AG04449 (cell line): ENCODE measurements at regions of chr2 and their contacts with region 1.

Region 1: GRCh38 chr2:197191177-197191939 is 119.2 kb downstream of the ANKRD44 start:
- DNase-seq: no peak
- H3K4me3 ChIP-seq: no peak overlapping the region
- CTCF ChIP-seq: peak; percentile 40

Region 2: DNA sequence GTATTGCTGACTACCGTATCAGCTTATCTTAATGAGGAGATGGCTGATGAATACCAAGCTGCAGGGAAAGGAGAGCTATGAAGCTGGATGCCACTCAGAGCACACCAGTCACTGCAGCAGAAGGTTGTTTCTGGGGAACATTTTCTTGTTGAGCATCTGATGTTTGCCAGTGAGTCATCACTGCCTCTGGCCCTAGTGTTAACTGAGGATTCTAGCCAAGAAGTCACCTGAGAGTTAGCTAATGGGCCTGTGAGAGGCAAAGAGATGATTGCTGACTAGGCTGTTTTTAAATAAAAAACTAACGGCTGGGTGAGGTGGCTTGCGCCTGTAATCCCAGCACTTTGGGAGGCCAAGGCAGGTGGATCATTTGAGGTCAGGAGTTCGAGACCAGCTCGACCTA is 514.0 kb before region 1 on chr2:
- CTCF ChIA-PET with region 1: no interaction called
- POLR2A ChIA-PET with region 1: no interaction called
- DNase-seq: no peak
- H3K4me3 ChIP-seq: no peak overlapping the region
- CTCF ChIP-seq: no peak

Region 3: DNA sequence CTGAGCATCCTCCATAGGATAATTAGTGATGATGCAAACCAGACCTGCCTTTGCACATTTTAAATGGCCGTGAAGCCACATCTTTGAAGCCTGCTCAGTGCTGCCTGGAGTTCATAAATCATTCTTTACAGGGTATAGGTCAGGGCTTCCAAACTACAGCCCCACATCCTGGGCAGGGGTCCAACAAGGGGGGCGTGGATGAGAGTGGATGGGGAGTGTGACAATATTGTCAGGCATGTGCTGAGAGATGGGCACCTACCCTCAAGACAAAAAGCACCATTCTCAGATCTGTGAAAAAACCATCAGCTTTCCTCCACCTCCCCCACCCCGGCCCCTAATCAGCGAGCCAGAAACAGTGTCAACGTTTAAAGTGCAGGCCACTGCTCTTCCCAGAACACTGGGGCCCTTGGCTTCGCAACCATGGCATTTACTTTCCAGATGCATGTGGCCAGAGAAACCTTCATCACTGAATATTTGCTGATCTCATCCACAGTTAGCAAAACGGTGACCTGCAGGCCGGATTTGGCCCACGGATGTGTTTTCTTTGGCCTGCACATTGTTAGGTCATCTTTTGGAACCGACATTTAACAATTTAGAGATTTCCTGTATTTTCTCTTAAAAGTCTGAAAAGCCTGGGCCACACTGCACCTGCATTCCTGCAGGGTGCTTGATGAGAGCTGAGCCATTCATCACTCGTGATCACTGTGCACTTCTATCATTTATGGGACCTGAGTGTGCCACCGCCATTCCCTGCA is 11.4 kb before region 1 on chr2:
- CTCF ChIA-PET with region 1: interaction called, 42 read pairs
- POLR2A ChIA-PET with region 1: no interaction called
- DNase-seq: no peak
- H3K4me3 ChIP-seq: no peak overlapping the region
- CTCF ChIP-seq: no peak

Region 4: DNA sequence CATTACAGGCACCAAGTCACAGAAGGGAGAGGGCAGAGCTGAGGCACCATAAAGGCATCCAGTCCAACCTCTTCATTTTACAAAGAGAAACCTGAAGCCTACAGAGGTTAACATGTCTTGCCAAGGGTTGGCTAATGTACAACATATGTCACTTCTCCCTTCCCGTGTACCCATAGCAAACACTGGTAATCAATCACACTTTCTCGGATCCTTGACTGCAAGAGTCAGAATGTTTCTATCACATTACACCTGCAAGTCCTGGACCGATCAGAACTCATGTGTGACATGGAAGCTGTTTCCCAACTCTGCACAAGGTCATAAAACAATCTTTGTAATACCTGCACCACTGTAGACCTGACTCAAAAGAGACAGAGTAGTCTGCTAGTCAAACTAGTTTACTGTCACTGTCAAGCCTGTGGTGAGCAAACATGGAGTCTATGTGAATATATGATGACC is 113.2 kb after region 1 on chr2:
- CTCF ChIA-PET with region 1: interaction called, 14 read pairs
- POLR2A ChIA-PET with region 1: no interaction called
- DNase-seq: no peak
- H3K4me3 ChIP-seq: no peak overlapping the region
- CTCF ChIP-seq: no peak

Region 5: DNA sequence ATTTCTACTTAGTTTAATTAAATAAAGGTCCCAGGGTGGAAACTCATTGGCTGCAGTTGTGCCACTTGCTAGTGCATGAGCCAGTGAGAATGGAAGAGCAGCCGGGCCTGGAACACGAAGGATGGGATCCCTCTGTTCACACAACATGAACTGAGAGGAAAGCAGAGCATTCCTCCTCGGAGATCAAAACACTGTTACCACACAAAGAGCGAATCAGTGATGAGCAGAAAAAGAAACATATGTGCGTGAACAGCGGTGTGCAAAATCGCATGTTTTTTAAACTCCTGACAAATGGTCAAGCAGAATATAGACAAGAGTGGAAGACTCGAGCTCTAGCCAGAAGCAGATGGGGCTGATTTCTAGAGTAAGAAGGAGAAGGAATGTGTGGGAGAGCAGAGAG is 147.7 kb after region 1 on chr2:
- CTCF ChIA-PET with region 1: no interaction called
- POLR2A ChIA-PET with region 1: no interaction called
- DNase-seq: no peak
- H3K4me3 ChIP-seq: no peak overlapping the region
- CTCF ChIP-seq: no peak

Region 6: GRCh38 chr2:197356136-197356535 is 164.8 kb after region 1 on chr2:
- CTCF ChIA-PET with region 1: interaction called, 12 read pairs
- POLR2A ChIA-PET with region 1: no interaction called
- DNase-seq: no peak
- H3K4me3 ChIP-seq: no peak overlapping the region
- CTCF ChIP-seq: peak; percentile 16